Activated T-helper 1 cell treated with anti-CD3 and anti-CD28 coated beads, Interleukin-12 subunit alpha, Interleukin-12 subunit beta, Interleukin-2, Interleukin-4 antibody, amounts not matched to agents 30 ng/mL and 10 ng/mL and 1 ng/mL, durations not matched to agents 14 hours and 24 hours and 36 hours (primary cell): ENCODE measurements at regions of chr4 and their contacts with region 1.

Region 1: GRCh38 chr4:153528705-153529485 is 62.7 kb downstream of the TMEM131L start:
- DNase-seq: no peak
- H3K4me3 Mint-ChIP-seq: peak overlapping the region; percentile 71
- H3K27ac Mint-ChIP-seq: peak overlapping the region; percentile 93
- H3K4me1 Mint-ChIP-seq: peaks cover 66% of the 10 kb centered on the region
- H3K27me3 Mint-ChIP-seq: no peaks in the 10 kb centered on the region

Region 2: GRCh38 chr4:152690706-152691651 is 837.9 kb before region 1 on chr4:
- intact Hi-C with region 1: no loop called
- DNase-seq: no peak
- H3K4me3 Mint-ChIP-seq: no peak overlapping the region
- H3K27ac Mint-ChIP-seq: no peak overlapping the region
- H3K4me1 Mint-ChIP-seq: peaks cover 3% of the 10 kb centered on the region
- H3K27me3 Mint-ChIP-seq: peaks cover 2% of the 10 kb centered on the region

Region 3: GRCh38 chr4:153466081-153466948 is 62.6 kb before region 1 on chr4 and contains the start of gene TMEM131L:
- intact Hi-C with region 1: loop called (anchors 1 kb)
- DNase-seq: peak; percentile 63
- H3K4me3 Mint-ChIP-seq: peak within 1 kb of the TSS; percentile 89
- H3K27ac Mint-ChIP-seq: peak within 1 kb of the TSS; percentile 90
- H3K4me1 Mint-ChIP-seq: peaks cover 50% of the 10 kb centered on the region
- H3K27me3 Mint-ChIP-seq: no peaks in the 10 kb centered on the region
- total RNA-seq, gene TMEM131L: 39.5 and 42.2 TPM in 2 replicates

Region 4: DNA sequence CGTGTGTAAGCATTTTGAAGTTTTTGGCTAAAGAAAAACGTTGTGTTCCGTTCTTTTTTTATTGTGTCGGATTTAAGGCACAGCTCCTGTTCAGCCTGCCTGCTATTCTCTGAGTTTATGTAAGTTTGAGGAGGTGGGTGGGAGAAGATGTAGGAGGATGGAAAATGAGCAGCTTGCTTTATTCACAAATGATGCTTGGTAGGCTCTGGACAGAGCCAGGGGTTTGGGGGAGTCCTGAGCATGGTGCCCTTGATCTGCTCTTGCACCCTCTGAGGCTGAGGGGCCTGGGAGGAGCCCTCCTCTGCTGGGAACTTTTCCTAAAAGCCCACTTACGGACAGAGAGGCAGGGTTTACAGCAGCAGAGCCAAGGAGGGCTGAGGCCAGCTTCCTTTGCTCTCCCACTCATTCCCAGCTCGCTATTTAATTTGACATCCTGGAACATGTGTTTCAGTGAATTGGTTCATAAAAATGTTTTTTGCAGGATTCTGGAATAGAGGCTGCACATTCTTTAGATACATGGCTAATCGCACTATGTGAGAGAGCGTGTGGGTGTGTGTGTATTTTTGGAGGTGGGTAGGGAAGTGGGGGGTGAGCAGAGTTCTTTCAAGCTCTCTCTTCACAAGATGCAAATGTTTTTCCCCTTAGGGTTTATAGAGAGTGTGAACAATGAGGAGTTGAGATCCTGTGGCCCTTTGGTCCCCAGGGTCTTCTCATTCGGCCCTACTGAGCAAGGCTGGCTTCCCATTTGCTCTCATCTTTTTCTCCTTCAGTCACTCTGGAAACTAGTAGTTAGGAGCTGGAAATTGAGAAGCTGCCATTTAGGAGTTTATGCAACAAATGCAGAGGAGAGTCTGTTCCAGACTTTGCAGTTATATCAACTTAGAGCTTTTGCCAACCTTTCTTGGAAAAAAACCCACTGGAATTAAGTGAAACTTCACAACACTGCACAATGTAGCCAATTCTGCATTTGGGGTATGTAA is 30.6 kb before region 1 on chr4:
- intact Hi-C with region 1: loop called (anchors 1 kb)
- DNase-seq: no peak
- H3K4me3 Mint-ChIP-seq: peak overlapping the region; percentile 79
- H3K27ac Mint-ChIP-seq: peak overlapping the region; percentile 90
- H3K4me1 Mint-ChIP-seq: peaks cover 89% of the 10 kb centered on the region
- H3K27me3 Mint-ChIP-seq: no peaks in the 10 kb centered on the region

Region 5: GRCh38 chr4:153541456-153542096 is 12.7 kb after region 1 on chr4:
- intact Hi-C with region 1: loop called (anchors 1 kb)
- DNase-seq: peak; percentile 32
- H3K4me3 Mint-ChIP-seq: no peak overlapping the region
- H3K27ac Mint-ChIP-seq: no peak overlapping the region
- H3K4me1 Mint-ChIP-seq: peaks cover 38% of the 10 kb centered on the region
- H3K27me3 Mint-ChIP-seq: no peaks in the 10 kb centered on the region

Region 6: DNA sequence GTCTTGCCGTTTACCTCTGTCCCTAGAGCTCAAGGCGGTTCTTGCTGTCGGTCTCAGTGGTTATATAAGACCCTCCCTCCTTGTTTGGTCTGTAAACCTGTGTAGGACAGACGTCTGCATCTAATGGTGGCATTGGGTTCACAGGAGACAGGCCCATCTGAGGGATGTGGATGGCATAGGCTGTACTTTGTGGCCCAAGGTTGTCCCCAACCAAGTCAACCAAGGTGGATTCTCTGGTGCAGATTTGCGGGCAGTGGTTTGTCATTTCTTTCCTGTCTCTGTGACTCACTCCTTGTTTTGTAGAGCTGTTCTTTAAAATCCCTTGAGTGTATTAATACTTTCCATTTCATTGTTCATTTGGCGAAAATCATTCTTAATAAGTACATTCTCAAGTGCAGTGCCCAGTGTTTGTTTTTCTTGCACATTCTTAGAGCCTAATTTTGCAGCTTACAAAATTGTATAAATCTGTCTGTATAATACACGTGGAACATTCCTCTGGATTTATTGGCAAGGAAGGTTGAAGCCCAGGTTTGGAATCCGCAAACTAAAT is 87.2 kb after region 1 on chr4:
- intact Hi-C with region 1: loop called (anchors 5 kb)
- DNase-seq: peak; percentile 16
- H3K4me3 Mint-ChIP-seq: no peak overlapping the region
- H3K27ac Mint-ChIP-seq: peak overlapping the region; percentile 29
- H3K4me1 Mint-ChIP-seq: peaks cover 26% of the 10 kb centered on the region
- H3K27me3 Mint-ChIP-seq: no peaks in the 10 kb centered on the region